ENCODE measurements at regions of chr18 and their contacts with region 1.

Region 1: GRCh38 chr18:56083097-56083521 is 495.1 kb upstream of the TCF4 start:
- DNase-seq: no peak
- ATAC-seq: no peak
- H3K4me3 ChIP-seq: no peak overlapping the region
- H3K4me3 Mint-ChIP-seq: no peak overlapping the region
- H3K27ac ChIP-seq: no peak overlapping the region
- H3K27ac Mint-ChIP-seq: no peak overlapping the region
- H3K4me1 ChIP-seq: no peaks in the 10 kb centered on the region
- H3K4me1 Mint-ChIP-seq: no peaks in the 10 kb centered on the region
- H3K27me3 ChIP-seq: no peaks in the 10 kb centered on the region
- H3K27me3 Mint-ChIP-seq: no peaks in the 10 kb centered on the region

Region 2: GRCh38 chr18:55136864-55137263 is 946.2 kb before region 1 on chr18:
- CTCF ChIA-PET with region 1: no interaction called
- POLR2A ChIA-PET with region 1: no interaction called
- intact Hi-C with region 1: no loop called
- DNase-seq: no peak
- ATAC-seq: no peak
- H3K4me3 ChIP-seq: no peak overlapping the region
- H3K4me3 Mint-ChIP-seq: no peak overlapping the region
- H3K27ac ChIP-seq: no peak overlapping the region
- H3K27ac Mint-ChIP-seq: no peak overlapping the region
- H3K4me1 ChIP-seq: no peaks in the 10 kb centered on the region
- H3K4me1 Mint-ChIP-seq: no peaks in the 10 kb centered on the region
- H3K27me3 ChIP-seq: no peaks in the 10 kb centered on the region
- H3K27me3 Mint-ChIP-seq: peaks cover 0 to 12% (median 5%) of the 10 kb centered on the region in 5 donors

Region 3: GRCh38 chr18:56139792-56140254 is 56.7 kb after region 1 on chr18:
- CTCF ChIA-PET with region 1: no interaction called
- POLR2A ChIA-PET with region 1: no interaction called
- intact Hi-C with region 1: loop called in 1 of 2 experiments (anchors 10 kb)
- DNase-seq: no peak
- ATAC-seq: no peak
- H3K4me3 ChIP-seq: no peak overlapping the region
- H3K4me3 Mint-ChIP-seq: no peak overlapping the region
- H3K27ac ChIP-seq: no peak overlapping the region
- H3K27ac Mint-ChIP-seq: no peak overlapping the region
- H3K4me1 ChIP-seq: no peaks in the 10 kb centered on the region
- H3K4me1 Mint-ChIP-seq: no peaks in the 10 kb centered on the region
- H3K27me3 ChIP-seq: no peaks in the 10 kb centered on the region
- H3K27me3 Mint-ChIP-seq: no peaks in the 10 kb centered on the region

Measured in naive thymus-derived CD4-positive, alpha-beta T cell (primary cell).